GM10248 (cell line): ENCODE measurements at regions of chr17 and their contacts with region 1.

Region 1: DNA sequence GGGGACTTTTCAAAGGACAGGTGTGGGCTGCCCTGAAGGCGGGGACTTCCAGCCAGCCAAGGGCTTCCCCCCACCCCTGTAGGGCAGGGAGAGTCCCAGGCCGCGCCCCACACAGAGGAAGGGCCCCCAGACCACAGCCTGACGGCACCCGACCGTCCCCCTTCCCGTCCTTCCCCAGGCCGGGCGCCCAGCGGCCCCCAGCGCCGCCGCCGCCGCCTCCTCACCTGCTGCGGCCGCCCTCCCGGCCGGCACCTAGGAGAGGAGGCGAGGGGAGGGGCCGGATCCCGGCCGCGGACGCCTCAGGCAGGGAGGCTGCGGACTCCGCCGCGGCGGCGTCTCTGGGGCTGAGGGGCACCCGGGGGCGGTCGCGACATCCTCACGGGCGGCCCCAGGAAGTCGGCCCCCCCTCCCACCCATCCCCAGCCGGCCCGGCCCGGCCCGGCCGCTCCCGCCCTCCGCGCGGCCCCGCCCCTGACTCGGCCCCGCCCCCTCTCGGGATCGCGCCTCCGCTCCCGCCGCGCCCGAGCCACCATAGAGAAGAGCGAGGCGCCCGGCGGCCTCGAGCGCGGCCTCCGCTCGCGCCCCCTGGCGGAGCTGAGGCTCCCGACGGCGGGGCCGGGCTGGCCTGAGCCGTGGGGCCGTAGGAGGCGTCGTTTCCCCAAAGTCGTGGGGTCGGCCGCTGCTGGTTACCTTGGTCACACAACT is 25.5 kb upstream of the RFFL start:
- DNase-seq: peak; percentile 91
- CTCF ChIP-seq: peak; percentile 91

Region 2: DNA sequence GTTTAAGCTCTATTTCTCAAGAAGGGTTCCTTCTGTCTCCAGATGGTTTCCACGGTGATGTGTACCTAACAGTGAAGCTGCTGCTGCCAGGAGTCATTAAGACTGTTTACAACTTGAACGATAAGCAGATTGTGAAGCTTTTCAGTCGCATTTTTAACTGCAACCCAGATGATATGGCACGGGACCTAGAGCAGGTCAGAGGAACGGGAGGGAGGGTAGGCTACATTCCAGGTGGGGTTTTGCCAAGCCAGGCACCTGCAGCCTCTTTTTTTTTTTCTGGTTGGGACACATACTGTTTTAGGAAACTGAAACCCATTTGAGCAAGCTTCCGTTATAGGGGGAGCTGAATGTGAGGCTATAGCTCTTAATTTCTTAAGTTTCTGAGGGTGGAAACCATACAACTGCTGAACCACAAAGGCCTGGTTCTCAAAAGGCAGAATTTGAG is 98.1 kb before region 1 on chr17:
- CTCF ChIA-PET with region 1: interaction called, 61 read pairs
- POLR2A ChIA-PET with region 1: no interaction called
- DNase-seq: no peak
- CTCF ChIP-seq: no peak

Region 3: DNA sequence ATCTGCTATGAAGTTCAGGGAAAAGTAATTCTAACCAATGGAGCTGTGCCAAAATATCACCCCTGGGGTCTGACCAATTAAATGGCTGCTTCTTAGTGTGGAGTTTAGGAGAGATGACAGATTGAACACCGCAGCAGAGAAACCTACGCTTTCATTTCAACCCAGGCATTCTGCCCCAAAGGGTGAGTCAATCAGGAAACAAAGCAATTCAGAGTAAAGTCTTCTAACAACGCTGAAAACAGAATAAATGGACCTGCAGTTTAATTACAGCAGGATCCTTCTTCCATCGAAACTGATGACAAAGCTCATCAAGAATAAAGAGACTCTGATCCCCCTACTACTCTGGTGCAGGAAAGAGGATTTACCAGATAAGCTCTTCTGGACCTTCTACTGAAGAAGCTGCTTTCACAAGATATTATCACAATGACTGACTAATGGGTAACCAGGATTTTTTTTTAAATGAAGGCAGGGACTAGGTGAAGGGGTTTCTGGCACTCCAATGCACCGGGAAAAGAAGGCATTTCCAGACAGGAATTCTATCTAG is 42.2 kb before region 1 on chr17:
- CTCF ChIA-PET with region 1: interaction called, 10 read pairs
- POLR2A ChIA-PET with region 1: no interaction called
- DNase-seq: peak; percentile 62
- CTCF ChIP-seq: no peak

Region 4: GRCh38 chr17:35063514-35064223 is 25.4 kb before region 1 on chr17 and contains the start of gene RFFL:
- CTCF ChIA-PET with region 1: interaction called, 25 read pairs
- POLR2A ChIA-PET with region 1: no interaction called
- DNase-seq: peak; percentile 81
- CTCF ChIP-seq: peak; percentile 25

Region 5: DNA sequence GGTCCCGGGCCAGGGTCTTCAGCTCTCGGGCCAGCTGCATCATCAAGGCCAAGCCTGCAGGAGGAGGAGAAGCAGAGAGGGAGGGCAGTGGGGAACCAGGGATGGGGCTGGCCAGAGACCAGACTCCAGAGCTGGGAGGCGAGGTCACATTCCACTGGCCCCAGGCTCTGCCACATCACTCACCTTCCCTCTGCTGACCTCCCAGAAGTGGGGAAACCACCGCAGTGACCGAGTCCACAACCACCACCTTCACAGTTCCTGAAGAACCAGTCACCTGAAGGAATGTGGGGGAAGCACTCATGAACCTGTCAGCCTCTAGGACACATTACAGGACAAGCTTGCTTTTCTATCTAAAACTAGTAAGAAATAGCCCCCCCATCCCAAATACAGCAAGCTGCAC is 14.2 kb after region 1 on chr17:
- CTCF ChIA-PET with region 1: interaction called, 15 read pairs
- POLR2A ChIA-PET with region 1: interaction called, 3 read pairs
- DNase-seq: no peak
- CTCF ChIP-seq: no peak